Heart right ventricle (tissue), 16 donors: ENCODE measurements at regions of chr13 and their contacts with region 1.

Region 1: GRCh38 chr13:50801087-50801931 is 42.2 kb downstream of the DLEU7 start:
- DNase-seq: peak in 1 of 2 donors; percentile 82
- ATAC-seq: peak; percentile 89 to 95 (median 93)
- H3K4me3 ChIP-seq: peak overlapping the region in 2 of 10 donors; percentile 21 to 22
- H3K27ac ChIP-seq: peak overlapping the region in 9 of 10 donors; percentile 4 to 63 (median 38)
- H3K4me1 ChIP-seq: peaks cover 3 to 41% (median 25%) of the 10 kb centered on the region in 9 donors
- H3K27me3 ChIP-seq: no peaks in the 10 kb centered on the region
- CTCF ChIP-seq: peak; percentile 56 to 87 (median 80)

Region 2: DNA sequence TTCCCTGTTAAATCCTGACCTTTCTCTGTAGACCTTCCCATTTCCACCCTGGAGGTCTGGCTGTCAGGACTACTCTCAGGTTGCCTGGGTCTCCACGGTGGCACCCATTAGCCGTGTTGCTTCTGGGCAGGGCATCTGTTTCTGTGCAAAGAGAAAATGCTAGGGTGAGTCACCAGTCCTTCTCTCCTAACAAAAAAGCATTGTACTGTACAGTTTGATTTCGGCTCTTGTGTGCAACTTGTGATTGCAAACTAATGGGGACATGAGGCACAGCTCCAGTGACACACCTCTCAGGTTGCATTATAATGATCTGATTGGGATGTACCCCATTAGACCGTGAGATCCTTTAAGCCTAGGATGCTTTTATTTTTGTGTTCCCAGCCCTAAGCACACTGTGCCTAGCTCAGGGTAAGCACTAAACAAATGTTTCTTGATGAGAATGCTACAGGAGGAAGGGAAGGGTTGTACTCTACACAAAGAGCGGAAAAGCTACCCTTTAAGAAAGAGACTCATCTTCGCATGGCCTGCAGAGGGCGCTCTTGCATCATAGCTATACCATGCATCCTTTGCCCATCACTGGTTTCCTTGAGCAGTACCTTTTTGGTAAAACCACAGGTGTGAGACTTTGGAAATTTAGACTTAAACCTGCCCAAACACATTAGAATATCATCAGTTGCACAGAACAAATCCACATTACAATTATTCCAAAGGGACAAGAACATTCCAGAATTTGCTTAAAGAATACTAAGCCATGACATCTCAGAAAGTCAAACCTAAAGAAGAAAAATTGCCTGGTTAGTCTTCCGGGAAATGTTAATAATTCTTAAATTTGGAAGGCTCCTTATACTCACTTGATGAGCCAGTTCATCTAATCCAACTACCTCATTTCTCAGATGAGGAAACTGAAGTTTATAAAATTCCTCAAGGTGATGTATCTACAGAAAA is 824.7 kb before region 1 on chr13:
- intact Hi-C with region 1: loop called (anchors 2 to 10 kb)
- DNase-seq: peak; percentile 57 to 71
- ATAC-seq: peak; percentile 64 to 85 (median 80)
- H3K4me3 ChIP-seq: no peak overlapping the region
- H3K27ac ChIP-seq: no peak overlapping the region
- H3K4me1 ChIP-seq: peaks cover 0 to 5% (median 0%) of the 10 kb centered on the region in 9 donors
- H3K27me3 ChIP-seq: no peaks in the 10 kb centered on the region
- CTCF ChIP-seq: peak; percentile 71 to 94 (median 87)

Region 3: GRCh38 chr13:50081679-50082425 is 719.5 kb before region 1 on chr13:
- intact Hi-C with region 1: loop called in 7 of 10 experiments (anchors 1 to 10 kb)
- DNase-seq: peak; percentile 96 to 98
- ATAC-seq: peak; percentile 95 to 98 (median 97)
- H3K4me3 ChIP-seq: peak overlapping the region; percentile 42 to 82 (median 70)
- H3K27ac ChIP-seq: peak overlapping the region; percentile 30 to 91 (median 77)
- H3K4me1 ChIP-seq: peaks cover 0 to 82% (median 30%) of the 10 kb centered on the region in 9 donors
- H3K27me3 ChIP-seq: peaks cover 0 to 5% (median 0%) of the 10 kb centered on the region in 7 donors
- CTCF ChIP-seq: peak in 3 of 9 donors; percentile 18 to 30 (median 23)

Region 4: GRCh38 chr13:50370303-50370950 is 430.9 kb before region 1 on chr13:
- intact Hi-C with region 1: loop called in 3 of 10 experiments (anchors 5 to 10 kb)
- DNase-seq: no peak
- ATAC-seq: no peak
- H3K4me3 ChIP-seq: no peak overlapping the region
- H3K27ac ChIP-seq: no peak overlapping the region
- H3K4me1 ChIP-seq: peaks cover 0 to 9% (median 0%) of the 10 kb centered on the region in 9 donors
- H3K27me3 ChIP-seq: no peaks in the 10 kb centered on the region
- CTCF ChIP-seq: no peak

Region 5: DNA sequence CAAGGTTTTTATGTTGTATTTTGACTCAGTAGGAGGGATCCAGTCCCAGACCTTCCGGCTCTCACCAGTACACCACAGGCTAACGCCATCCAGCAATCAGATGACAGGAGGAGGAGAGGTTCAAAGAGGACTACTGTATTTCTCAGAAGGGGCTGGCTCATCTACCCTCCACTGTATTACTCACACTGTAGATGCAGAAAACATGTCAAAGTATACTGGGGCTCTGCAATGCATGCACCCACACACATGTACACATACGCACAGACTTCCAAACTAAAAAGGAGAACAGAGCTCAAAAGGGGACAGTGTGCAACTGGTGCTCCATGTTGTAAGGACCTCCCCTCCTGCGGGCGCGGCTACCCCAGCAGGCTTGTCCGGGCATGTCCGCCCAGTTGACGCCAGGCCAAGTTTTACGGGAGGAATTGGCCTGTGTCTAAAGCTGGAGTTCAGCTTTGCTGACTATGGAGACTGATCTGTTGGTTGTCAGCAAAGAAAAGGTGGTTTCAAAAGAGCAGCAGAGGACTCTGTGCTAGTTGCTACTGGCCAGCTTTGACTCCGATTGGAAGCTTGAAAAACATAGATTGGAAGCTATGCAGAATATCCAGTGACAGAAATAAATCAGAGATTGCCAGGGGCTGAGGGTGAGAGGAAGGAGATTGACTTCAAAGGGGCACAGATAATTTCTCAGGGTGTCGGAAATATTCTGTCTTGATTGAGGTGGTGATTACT is 272.0 kb before region 1 on chr13:
- intact Hi-C with region 1: loop called in 7 of 10 experiments (anchors 2 to 10 kb)
- DNase-seq: peak; percentile 88 to 91
- ATAC-seq: peak; percentile 89 to 96 (median 94)
- H3K4me3 ChIP-seq: peak overlapping the region in 8 of 10 donors; percentile 5 to 34 (median 26)
- H3K27ac ChIP-seq: peak overlapping the region; percentile 26 to 93 (median 78)
- H3K4me1 ChIP-seq: peaks cover 0 to 51% (median 37%) of the 10 kb centered on the region in 9 donors
- H3K27me3 ChIP-seq: no peaks in the 10 kb centered on the region
- CTCF ChIP-seq: peak in 1 of 9 donors; percentile 11

Region 6: DNA sequence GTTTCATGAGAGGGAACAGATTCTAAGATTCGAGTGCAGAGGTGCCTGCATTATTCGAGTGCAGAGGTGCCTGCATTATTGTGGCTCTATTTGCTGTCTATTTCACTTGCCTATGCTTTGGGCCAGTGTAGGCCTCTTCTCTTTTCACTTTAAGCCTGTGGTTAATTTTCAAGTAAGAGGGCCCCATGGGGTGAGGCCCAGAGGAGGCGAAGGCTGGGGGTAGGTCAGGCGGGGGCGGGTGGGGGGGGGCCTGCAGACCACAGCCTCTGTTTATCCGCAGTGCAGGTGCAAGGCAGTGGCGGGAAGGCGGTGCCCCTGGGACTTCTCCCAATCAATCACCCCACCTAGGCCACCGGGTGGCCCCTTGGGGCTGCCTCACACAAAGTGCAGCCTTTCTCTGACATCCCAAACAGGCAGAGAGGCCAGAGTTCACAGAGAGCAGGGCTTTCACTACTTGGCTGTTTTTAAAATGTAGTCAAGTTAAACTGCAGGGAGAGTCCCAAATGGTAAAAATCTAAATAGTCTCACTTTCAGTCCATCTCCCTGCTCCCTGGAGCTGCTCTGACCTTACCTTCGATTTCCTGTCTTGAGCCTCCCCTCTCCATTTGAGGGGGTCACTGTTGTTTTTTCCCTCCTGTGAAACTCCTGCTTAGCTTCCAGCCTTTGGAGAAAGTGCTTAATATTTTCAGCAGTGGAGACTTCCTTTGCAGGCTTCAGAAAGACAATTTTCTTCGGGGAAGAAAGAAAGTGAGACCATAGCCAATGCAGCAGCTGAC is 206.8 kb before region 1 on chr13:
- intact Hi-C with region 1: loop called in 3 of 10 experiments (anchors 5 kb)
- DNase-seq: no peak
- ATAC-seq: peak in 1 of 8 donors; percentile 11
- H3K4me3 ChIP-seq: peak overlapping the region in 1 of 10 donors; percentile 3
- H3K27ac ChIP-seq: peak overlapping the region in 5 of 10 donors; percentile 18 to 68 (median 56)
- H3K4me1 ChIP-seq: peaks cover 0 to 60% (median 46%) of the 10 kb centered on the region in 9 donors
- H3K27me3 ChIP-seq: no peaks in the 10 kb centered on the region
- CTCF ChIP-seq: no peak

Region 7: GRCh38 chr13:50911937-50912795 is 110.9 kb after region 1 on chr13:
- intact Hi-C with region 1: loop called in 2 of 10 experiments (anchors 5 to 10 kb)
- DNase-seq: peak; percentile 87 to 89
- ATAC-seq: peak in 7 of 8 donors; percentile 14 to 69 (median 49)
- H3K4me3 ChIP-seq: peak overlapping the region in 1 of 10 donors; percentile 86
- H3K27ac ChIP-seq: peak overlapping the region in 6 of 10 donors; percentile 20 to 96 (median 69)
- H3K4me1 ChIP-seq: peaks cover 8 to 75% (median 56%) of the 10 kb centered on the region in 9 donors
- H3K27me3 ChIP-seq: no peaks in the 10 kb centered on the region
- CTCF ChIP-seq: peak; percentile 65 to 91 (median 87)

Region 8: DNA sequence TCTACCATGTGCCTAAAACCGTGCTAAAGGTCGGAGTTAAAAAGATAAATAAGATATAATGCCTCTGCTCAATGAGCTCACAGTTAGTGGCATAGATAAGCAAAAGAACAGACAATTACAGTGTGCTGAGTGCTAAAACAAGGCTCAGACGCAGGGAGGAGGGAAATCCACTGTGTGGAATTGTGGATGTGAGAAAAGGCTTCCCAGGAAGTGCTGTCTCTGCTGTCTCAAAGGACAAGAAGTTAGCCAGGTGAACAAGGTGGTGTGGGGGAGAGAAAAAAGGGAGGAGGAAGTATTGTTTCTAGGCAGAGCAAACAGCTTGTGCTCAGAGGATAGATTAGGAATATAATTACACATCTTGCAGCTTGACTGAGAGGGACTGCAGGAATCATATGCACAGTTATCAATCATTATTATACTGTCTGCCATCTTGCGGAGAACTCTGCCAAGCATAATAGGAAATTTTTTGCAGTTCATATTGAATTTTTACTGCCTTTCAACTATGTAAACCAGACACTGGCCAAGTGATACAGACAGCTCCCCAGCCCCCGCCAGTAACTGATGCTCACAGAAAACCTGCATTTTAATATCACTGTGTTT is 300.4 kb after region 1 on chr13:
- intact Hi-C with region 1: no loop called
- DNase-seq: no peak
- ATAC-seq: no peak
- H3K4me3 ChIP-seq: no peak overlapping the region
- H3K27ac ChIP-seq: no peak overlapping the region
- H3K4me1 ChIP-seq: no peaks in the 10 kb centered on the region
- H3K27me3 ChIP-seq: peaks cover 0 to 30% (median 20%) of the 10 kb centered on the region in 7 donors
- CTCF ChIP-seq: no peak